B cell (primary cell): ENCODE measurements at regions of chr10 and their contacts with region 1.

Region 1: DNA sequence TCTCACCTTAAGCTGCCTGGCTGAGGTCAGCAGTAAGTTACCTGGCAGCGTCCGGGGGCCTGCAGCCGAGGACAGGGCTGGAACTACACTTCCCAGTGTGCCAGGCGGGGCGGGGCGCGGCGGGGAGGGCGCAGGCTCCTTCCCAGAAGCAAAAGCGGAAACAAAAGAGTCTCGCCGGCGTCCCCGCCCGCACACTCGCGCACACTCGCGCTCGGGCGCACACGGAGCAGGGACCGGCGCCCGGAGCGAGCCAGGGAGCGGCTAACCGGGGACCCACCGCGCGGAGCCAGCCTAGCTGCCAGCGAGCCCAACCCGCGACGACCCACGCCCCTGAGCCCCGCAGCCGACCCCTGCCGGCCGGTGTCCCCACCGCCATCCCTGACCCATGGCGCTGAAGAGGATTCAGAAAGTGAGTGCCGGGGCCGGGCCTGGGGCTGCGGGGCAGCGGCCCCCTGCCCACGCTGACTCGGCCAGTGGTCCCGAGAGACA is at the start of gene UBE2D1:
- DNase-seq: peak; percentile 87
- ATAC-seq: peak; percentile 97
- H3K4me3 ChIP-seq: peak within 1 kb of the TSS; percentile 77 to 96 (median 93)
- H3K4me3 Mint-ChIP-seq: peak within 1 kb of the TSS; percentile 96
- H3K27ac ChIP-seq: peak within 1 kb of the TSS; percentile 13 to 87
- H3K27ac Mint-ChIP-seq: peak within 1 kb of the TSS; percentile 91
- H3K4me1 ChIP-seq: peaks cover 13% of the 10 kb centered on the region in 2 donors
- H3K4me1 Mint-ChIP-seq: peaks cover 31% of the 10 kb centered on the region
- H3K27me3 ChIP-seq: no peaks in the 10 kb centered on the region
- H3K27me3 Mint-ChIP-seq: no peaks in the 10 kb centered on the region
- CTCF ChIP-seq: no peak
- total RNA-seq, gene UBE2D1: 12.6 and 13.5 TPM in 2 replicates

Region 2: GRCh38 chr10:58384999-58385783 is 50.3 kb after region 1 on chr10 and contains the start of gene TFAM:
- CTCF ChIA-PET with region 1: interaction called, 9 read pairs
- POLR2A ChIA-PET with region 1: interaction called, 7 read pairs
- intact Hi-C with region 1: loop called (anchors 1 kb)
- DNase-seq: peak; percentile 97
- ATAC-seq: peak; percentile 84
- H3K4me3 ChIP-seq: peak within 1 kb of the TSS; percentile 73 to 89 (median 82)
- H3K4me3 Mint-ChIP-seq: peak within 1 kb of the TSS; percentile 92
- H3K27ac ChIP-seq: peak within 1 kb of the TSS; percentile 84 to 97
- H3K27ac Mint-ChIP-seq: peak within 1 kb of the TSS; percentile 96
- H3K4me1 ChIP-seq: peaks cover 24 to 29% of the 10 kb centered on the region in 2 donors
- H3K4me1 Mint-ChIP-seq: peaks cover 43% of the 10 kb centered on the region
- H3K27me3 ChIP-seq: no peaks in the 10 kb centered on the region
- H3K27me3 Mint-ChIP-seq: no peaks in the 10 kb centered on the region
- CTCF ChIP-seq: peak; percentile 47
- total RNA-seq, gene TFAM: 38.4 and 40.6 TPM in 2 replicates